OCI-LY7 (cell line): ENCODE measurements at regions of chr6 and their contacts with region 1.

Region 1: GRCh38 chr6:36759148-36759759 is 61.6 kb downstream of the RAB44 start:
- DNase-seq: peak; percentile 84
- H3K4me3 ChIP-seq: peak overlapping the region; percentile 23
- H3K27ac ChIP-seq: peak overlapping the region; percentile 92
- H3K4me1 ChIP-seq: peaks cover 47% of the 10 kb centered on the region
- CTCF ChIP-seq: peak; percentile 99

Region 2: DNA sequence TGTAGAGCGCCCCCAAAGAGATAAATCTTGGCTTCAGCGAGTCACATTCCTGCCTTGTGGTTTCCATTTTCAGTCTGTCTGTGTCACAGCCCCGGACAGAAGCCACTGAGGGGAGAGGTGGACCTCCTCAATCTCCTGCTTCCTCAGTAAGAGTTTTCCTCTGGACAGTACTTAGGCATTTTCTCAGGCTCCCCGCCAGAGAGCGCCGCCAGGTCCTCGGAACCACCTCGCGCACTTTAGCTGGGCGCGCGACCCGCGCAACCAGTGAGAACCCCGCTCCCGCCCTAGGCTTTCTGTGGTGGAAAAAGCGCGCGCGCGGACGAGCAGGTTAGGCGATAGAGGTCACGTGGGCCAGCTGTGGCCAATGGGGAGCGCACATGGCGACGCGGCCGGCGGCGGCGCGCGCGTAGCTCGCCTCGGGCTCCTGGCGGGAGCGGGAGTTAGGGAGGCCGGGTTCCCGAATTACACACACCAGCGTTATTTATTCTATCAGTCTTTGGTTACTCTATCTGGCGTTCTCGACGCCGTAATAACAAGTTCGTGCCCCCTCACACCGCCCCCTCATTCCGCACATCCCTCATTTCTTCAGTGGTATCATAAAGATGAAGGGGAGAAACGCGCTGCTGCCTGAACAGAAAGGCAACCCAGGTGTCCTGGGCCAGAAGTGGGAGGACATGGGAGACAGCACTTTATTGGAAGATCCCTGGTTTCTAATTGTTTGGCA is 336.0 kb before region 1 on chr6:
- CTCF ChIA-PET with region 1: no interaction called
- POLR2A ChIA-PET with region 1: no interaction called
- intact Hi-C with region 1: loop called (anchors 2 kb)
- DNase-seq: peak; percentile 99
- H3K4me3 ChIP-seq: peak overlapping the region; percentile 68
- H3K27ac ChIP-seq: peak overlapping the region; percentile 45
- H3K4me1 ChIP-seq: peaks cover 13% of the 10 kb centered on the region
- CTCF ChIP-seq: peak; percentile 85

Region 3: GRCh38 chr6:36623547-36624459 is 135.5 kb before region 1 on chr6:
- CTCF ChIA-PET with region 1: interaction called, 3 read pairs
- POLR2A ChIA-PET with region 1: interaction called, 3 read pairs
- intact Hi-C with region 1: loop called (anchors 1 kb)
- DNase-seq: peak; percentile 83
- H3K4me3 ChIP-seq: no peak overlapping the region
- H3K27ac ChIP-seq: no peak overlapping the region
- H3K4me1 ChIP-seq: peaks cover 22% of the 10 kb centered on the region
- CTCF ChIP-seq: peak; percentile 96

Region 4: DNA sequence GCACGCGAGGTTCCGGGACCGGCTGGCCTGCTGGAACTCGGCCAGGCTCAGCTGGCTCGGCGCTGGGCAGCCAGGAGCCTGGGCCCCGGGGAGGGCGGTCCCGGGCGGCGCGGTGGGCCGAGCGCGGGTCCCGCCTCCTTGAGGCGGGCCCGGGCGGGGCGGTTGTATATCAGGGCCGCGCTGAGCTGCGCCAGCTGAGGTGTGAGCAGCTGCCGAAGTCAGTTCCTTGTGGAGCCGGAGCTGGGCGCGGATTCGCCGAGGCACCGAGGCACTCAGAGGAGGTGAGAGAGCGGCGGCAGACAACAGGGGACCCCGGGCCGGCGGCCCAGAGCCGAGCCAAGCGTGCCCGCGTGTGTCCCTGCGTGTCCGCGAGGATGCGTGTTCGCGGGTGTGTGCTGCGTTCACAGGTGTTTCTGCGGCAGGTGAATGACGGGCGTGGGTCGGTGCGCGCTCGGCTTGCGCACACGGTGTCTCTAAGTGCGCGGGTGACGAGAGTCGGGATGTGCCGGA is 80.7 kb before region 1 on chr6 and contains the start of gene CDKN1A:
- CTCF ChIA-PET with region 1: interaction called, 5 read pairs
- POLR2A ChIA-PET with region 1: interaction called, 8 read pairs
- intact Hi-C with region 1: loop called (anchors 1 kb)
- DNase-seq: peak; percentile 33
- H3K4me3 ChIP-seq: no peak within 1 kb of the TSS
- H3K27ac ChIP-seq: no peak within 1 kb of the TSS
- H3K4me1 ChIP-seq: peaks cover 58% of the 10 kb centered on the region
- CTCF ChIP-seq: no peak
- total RNA-seq, gene CDKN1A: 0.13 and 0.41 TPM in 2 replicates

Region 5: GRCh38 chr6:36724514-36725390 is 34.5 kb before region 1 on chr6:
- CTCF ChIA-PET with region 1: interaction called, 4 read pairs
- POLR2A ChIA-PET with region 1: interaction called, 20 read pairs
- intact Hi-C with region 1: loop called (anchors 2 kb)
- DNase-seq: peak; percentile 64
- H3K4me3 ChIP-seq: no peak overlapping the region
- H3K27ac ChIP-seq: no peak overlapping the region
- H3K4me1 ChIP-seq: peaks cover 28% of the 10 kb centered on the region
- CTCF ChIP-seq: peak; percentile 79